AG04450 (cell line): ENCODE measurements at regions of chr4 and their contacts with region 1.

Region 1: DNA sequence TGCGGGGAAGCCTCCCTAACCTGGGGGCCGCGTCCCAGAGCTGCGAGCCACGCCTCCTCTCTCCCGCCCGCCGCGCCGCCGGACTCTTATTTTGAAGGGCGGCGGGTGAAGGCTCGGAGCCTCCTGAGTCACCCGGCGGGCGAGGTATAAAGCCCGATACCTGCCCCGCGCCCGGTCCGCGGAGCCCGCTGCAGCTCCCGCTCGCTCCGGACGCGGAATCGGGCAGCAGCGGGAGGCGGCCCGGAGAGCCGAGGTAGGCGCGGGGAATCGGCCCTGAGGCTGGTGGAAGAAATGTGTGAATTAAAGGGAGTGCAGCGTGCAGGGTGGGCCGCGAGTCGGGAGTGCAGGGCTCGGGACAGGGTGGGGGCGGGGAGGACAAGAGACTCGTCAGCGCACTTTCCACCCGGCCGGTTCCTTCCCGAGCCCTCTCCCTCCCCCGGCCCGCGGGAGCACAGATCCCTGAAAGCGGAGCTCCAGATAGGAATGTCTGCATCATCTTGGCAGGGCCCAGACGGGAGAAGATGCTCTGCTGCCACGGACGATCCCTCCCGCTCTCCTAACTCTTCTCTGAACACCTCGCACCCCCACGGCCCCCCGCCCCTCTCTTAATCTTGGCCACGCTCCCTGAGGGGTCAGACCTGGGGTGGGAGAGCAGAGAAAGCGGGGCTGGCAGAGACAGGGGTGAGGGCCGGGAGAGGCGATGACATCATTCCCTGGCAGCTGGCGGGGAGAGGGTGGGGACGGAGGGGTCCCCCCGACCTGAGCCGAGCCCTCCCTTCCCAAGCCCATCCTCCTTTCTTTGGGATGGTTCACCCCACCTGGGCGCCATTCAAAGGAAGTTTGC is 177.9 kb downstream of the CBR4 start:
- DNase-seq: no peak
- H3K4me3 ChIP-seq: peak overlapping the region; percentile 84
- H3K27ac ChIP-seq: peak overlapping the region; percentile 94
- H3K27me3 ChIP-seq: no peaks in the 10 kb centered on the region
- CTCF ChIP-seq: no peak

Region 2: DNA sequence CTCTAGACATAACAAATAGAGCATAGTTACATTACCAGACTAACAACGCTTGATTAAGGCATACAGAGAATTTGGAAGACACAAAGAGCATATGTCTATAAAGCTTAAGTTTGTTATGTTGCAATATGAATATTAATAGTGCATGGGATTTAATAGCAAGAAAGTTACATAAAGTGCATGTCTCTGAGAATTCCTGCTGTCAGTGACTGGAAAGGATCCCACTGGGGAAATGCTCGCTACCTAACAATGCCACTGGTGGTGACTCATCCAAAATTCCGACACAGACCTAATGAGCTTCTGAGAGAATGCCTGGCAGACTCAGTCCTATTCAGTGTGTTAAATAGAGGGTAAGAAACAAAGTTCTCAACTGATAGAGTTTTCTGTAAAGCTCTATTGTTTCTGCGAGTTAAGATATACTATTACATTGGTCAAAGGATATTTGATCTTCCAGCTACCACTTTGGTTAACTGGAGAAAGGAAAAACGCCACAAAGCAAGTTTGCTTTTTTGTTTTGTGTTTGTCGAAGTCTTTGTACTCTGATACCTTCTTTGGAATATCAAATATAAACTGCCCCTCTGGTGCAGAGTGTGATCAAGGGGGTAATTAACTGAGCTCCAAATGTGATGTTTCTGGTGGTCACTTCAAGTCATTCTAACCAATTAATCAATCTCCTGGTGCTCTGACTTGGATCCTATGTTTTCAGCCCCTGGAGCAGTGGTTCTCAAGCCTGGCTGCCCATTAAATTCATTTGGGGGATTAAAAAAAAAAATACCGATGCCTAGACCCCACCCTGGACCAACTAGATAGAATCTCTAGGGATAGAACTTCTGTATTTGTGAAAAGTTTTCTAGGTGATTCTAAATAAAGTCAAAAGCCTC is 227.4 kb before region 1 on chr4:
- CTCF ChIA-PET with region 1: no interaction called
- POLR2A ChIA-PET with region 1: no interaction called
- DNase-seq: no peak
- H3K4me3 ChIP-seq: no peak overlapping the region
- H3K27ac ChIP-seq: no peak overlapping the region
- H3K27me3 ChIP-seq: no peaks in the 10 kb centered on the region
- CTCF ChIP-seq: no peak

Region 3: GRCh38 chr4:168631241-168632162 is 200.6 kb before region 1 on chr4:
- CTCF ChIA-PET with region 1: no interaction called
- POLR2A ChIA-PET with region 1: interaction called, 19 read pairs
- DNase-seq: no peak
- H3K4me3 ChIP-seq: peak overlapping the region; percentile 78
- H3K27ac ChIP-seq: peak overlapping the region; percentile 61
- H3K27me3 ChIP-seq: no peaks in the 10 kb centered on the region
- CTCF ChIP-seq: peak; percentile 54

Region 4: GRCh38 chr4:168636506-168637196 is 195.5 kb before region 1 on chr4:
- CTCF ChIA-PET with region 1: no interaction called
- POLR2A ChIA-PET with region 1: interaction called, 19 read pairs
- DNase-seq: no peak
- H3K4me3 ChIP-seq: no peak overlapping the region
- H3K27ac ChIP-seq: peak overlapping the region; percentile 78
- H3K27me3 ChIP-seq: no peaks in the 10 kb centered on the region
- CTCF ChIP-seq: no peak

Region 5: GRCh38 chr4:168674077-168674747 is 157.9 kb before region 1 on chr4:
- CTCF ChIA-PET with region 1: no interaction called
- POLR2A ChIA-PET with region 1: interaction called, 10 read pairs
- DNase-seq: no peak
- H3K4me3 ChIP-seq: no peak overlapping the region
- H3K27ac ChIP-seq: peak overlapping the region; percentile 47
- H3K27me3 ChIP-seq: no peaks in the 10 kb centered on the region
- CTCF ChIP-seq: no peak

Region 6: GRCh38 chr4:168734703-168735678 is 97.2 kb before region 1 on chr4:
- CTCF ChIA-PET with region 1: no interaction called
- POLR2A ChIA-PET with region 1: interaction called, 11 read pairs
- DNase-seq: no peak
- H3K4me3 ChIP-seq: no peak overlapping the region
- H3K27ac ChIP-seq: no peak overlapping the region
- H3K27me3 ChIP-seq: no peaks in the 10 kb centered on the region
- CTCF ChIP-seq: no peak

Region 7: GRCh38 chr4:168815379-168816345 is 16.5 kb before region 1 on chr4:
- CTCF ChIA-PET with region 1: interaction called, 3 read pairs
- POLR2A ChIA-PET with region 1: interaction called, 204 read pairs
- DNase-seq: peak; percentile 86
- H3K4me3 ChIP-seq: peak overlapping the region; percentile 30
- H3K27ac ChIP-seq: peak overlapping the region; percentile 89
- H3K27me3 ChIP-seq: no peaks in the 10 kb centered on the region
- CTCF ChIP-seq: no peak

Region 8: GRCh38 chr4:168853771-168854219 is 21.7 kb after region 1 on chr4:
- CTCF ChIA-PET with region 1: interaction called, 3 read pairs
- POLR2A ChIA-PET with region 1: interaction called, 16 read pairs
- DNase-seq: no peak
- H3K4me3 ChIP-seq: no peak overlapping the region
- H3K27ac ChIP-seq: peak overlapping the region; percentile 48
- H3K27me3 ChIP-seq: no peaks in the 10 kb centered on the region
- CTCF ChIP-seq: no peak

Region 9: DNA sequence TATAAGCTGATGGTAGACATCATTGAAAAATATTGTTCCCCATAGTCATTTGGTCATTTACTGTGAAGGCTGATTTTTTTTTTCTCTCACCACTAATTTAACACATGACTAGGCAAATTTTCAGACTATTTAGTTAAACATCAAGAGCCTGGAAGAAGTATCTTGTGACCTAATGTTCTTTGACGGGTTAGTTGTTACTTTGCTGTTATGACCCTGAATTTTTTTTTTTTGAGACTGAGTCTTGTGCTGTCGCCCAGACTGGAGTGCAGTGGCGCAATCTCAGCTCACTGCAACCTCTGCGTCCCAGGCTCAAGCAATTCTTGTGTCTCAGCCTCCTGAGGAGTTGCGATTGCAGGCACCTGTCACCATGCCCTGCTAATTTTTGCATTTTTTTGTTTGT is 858.6 kb after region 1 on chr4:
- CTCF ChIA-PET with region 1: no interaction called
- POLR2A ChIA-PET with region 1: no interaction called
- DNase-seq: no peak
- H3K4me3 ChIP-seq: no peak overlapping the region
- H3K27ac ChIP-seq: no peak overlapping the region
- H3K27me3 ChIP-seq: no peaks in the 10 kb centered on the region
- CTCF ChIP-seq: no peak